ENCODE measurements at regions of chr1 and their contacts with region 1.

Region 1: DNA sequence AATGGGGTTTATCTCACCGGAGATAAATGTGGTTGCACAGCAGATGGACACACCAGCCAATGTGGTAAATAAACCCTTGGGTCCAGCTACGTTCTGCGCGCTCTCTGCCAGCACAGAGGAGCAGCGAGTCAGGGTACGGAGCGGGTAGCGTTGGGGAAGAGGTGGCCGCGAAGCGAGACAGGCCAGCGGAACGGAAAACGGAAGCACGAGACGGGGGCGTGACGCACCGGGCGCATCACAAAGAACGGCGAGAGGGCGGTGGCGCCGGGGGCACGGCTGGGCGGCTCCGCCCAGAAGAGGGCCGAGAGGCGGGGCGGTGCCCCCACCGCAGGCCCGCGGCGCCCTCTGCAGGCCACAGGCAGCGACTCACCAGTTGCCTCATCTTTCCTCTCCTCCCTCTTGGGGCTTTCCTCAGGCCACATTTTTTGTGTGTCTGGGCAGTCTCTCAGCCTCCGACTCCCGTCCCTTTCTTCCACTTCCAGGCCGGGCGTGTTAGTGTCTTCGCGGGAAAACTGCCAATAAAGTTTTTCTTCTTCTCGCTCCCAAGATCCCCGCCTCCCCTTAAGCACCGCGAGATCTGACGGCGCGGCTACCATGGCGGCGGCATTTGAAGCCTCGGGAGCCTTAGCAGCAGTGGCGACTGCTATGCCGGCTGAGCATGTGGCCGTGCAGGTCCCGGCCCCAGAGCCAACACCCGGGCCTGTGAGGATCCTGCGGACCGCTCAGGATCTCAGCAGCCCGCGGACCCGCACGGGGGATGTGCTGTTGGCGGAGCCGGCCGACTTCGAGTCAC is at the start of gene DDX20:
- DNase-seq: peak; percentile 94
- ATAC-seq: peak; percentile 89
- H3K4me3 Mint-ChIP-seq: peak within 1 kb of the TSS; percentile 93
- H3K27ac Mint-ChIP-seq: peak within 1 kb of the TSS; percentile 99
- H3K4me1 Mint-ChIP-seq: peaks cover 57% of the 10 kb centered on the region
- H3K27me3 Mint-ChIP-seq: no peaks in the 10 kb centered on the region
- total RNA-seq, gene DDX20: 18.1 to 18.9 TPM

Region 2: GRCh38 chr1:111448918-111449702 is 306.4 kb before region 1 on chr1 and contains the starts of genes ATP5PB and WDR77:
- CTCF ChIA-PET with region 1: interaction called, 5 read pairs
- POLR2A ChIA-PET with region 1: interaction called, 11 read pairs
- DNase-seq: peak; percentile 96
- ATAC-seq: peak; percentile 97
- H3K4me3 Mint-ChIP-seq: peak within 1 kb of the TSS; percentile 100
- H3K27ac Mint-ChIP-seq: peak within 1 kb of the TSS; percentile 99
- H3K4me1 Mint-ChIP-seq: peaks cover 76% of the 10 kb centered on the region
- H3K27me3 Mint-ChIP-seq: no peaks in the 10 kb centered on the region
- total RNA-seq, gene ATP5PB: 396 to 404 TPM
- total RNA-seq, gene WDR77: 54.3 to 57.8 TPM

Region 3: DNA sequence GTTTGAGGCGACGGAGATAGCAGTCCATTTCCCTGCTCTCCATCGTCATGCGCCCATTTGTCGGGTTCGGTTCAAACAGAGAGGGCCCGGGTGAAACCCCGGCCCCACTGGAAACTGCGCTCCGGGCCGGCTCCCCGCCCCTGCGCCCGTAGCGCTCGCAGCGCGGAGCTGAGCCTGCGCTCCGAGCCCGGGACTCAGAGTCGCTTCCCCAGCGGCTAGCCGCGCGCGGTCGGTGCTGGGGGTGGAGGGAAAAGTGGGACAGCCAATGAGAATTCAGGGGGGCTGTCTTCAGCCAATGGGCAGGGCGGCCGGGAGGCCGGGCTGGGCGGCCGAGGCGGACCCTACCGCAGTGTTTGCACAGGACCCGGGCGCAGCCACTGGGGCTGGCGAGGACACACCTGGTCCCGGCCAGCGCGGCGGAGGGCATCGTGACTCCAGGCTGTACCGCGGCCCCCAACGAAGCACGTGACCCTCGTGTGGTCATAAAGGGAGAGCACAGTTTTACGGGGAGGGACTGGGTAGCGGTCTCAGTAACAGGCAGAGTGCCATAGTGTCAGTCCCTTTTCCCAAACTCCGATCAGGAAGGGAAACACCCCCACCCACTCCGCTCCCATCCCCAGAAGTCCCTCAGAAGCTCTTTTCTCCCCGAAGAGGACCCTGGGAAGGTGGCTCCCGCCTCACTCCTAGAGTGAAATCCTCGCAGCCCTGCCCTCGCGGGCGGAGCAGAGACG is 16.2 kb before region 1 on chr1 and contains the start of gene INKA2:
- CTCF ChIA-PET with region 1: interaction called, 25 read pairs
- POLR2A ChIA-PET with region 1: interaction called, 10 read pairs
- DNase-seq: peak; percentile 88
- ATAC-seq: peak; percentile 90
- H3K4me3 Mint-ChIP-seq: peak within 1 kb of the TSS; percentile 80
- H3K27ac Mint-ChIP-seq: peak within 1 kb of the TSS; percentile 75
- H3K4me1 Mint-ChIP-seq: peaks cover 21% of the 10 kb centered on the region
- H3K27me3 Mint-ChIP-seq: peaks cover 46% of the 10 kb centered on the region
- total RNA-seq, gene INKA2: 4.1 to 4.3 TPM

Region 4: DNA sequence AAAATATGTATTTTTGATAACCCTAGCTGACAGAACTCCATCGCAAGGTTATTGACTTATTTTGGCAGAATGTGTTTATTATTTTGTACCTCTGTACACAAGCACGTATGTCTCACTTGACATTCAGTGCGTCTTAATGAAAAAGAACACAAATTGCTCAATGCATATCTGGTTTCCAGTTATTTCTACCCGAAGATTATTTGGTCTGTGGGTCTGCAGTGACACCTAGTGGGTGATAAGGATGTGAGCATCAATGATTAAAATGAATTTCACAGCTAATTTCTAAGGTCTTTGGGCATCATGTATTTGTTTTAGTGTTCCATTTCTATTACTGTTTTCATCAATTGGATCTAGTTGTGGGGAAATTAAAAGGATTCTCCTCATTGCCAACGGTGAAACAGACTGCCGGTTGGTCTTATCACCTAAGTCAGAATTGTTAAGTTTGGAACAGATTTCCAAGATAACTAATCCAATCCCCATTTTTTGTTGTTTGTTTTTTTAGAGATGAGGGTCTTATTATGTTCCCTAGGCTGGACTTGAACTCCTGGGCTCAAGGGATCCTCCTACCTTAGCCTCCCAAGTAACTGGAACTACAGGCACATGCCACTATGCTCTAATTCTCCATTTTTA is 14.1 kb after region 1 on chr1:
- CTCF ChIA-PET with region 1: interaction called, 40 read pairs
- POLR2A ChIA-PET with region 1: interaction called, 5 read pairs
- DNase-seq: peak; percentile 64
- ATAC-seq: no peak
- H3K4me3 Mint-ChIP-seq: no peak overlapping the region
- H3K27ac Mint-ChIP-seq: no peak overlapping the region
- H3K4me1 Mint-ChIP-seq: no peaks in the 10 kb centered on the region
- H3K27me3 Mint-ChIP-seq: no peaks in the 10 kb centered on the region

Region 5: GRCh38 chr1:111827946-111828538 is 72.5 kb after region 1 on chr1:
- CTCF ChIA-PET with region 1: no interaction called
- POLR2A ChIA-PET with region 1: no interaction called
- DNase-seq: no peak
- ATAC-seq: no peak
- H3K4me3 Mint-ChIP-seq: no peak overlapping the region
- H3K27ac Mint-ChIP-seq: no peak overlapping the region
- H3K4me1 Mint-ChIP-seq: no peaks in the 10 kb centered on the region
- H3K27me3 Mint-ChIP-seq: peaks cover 23% of the 10 kb centered on the region

Region 6: GRCh38 chr1:111864791-111865190 is 109.3 kb after region 1 on chr1:
- CTCF ChIA-PET with region 1: no interaction called
- POLR2A ChIA-PET with region 1: no interaction called
- DNase-seq: peak; percentile 36
- ATAC-seq: no peak
- H3K4me3 Mint-ChIP-seq: no peak overlapping the region
- H3K27ac Mint-ChIP-seq: no peak overlapping the region
- H3K4me1 Mint-ChIP-seq: peaks cover 4% of the 10 kb centered on the region
- H3K27me3 Mint-ChIP-seq: peaks cover 18% of the 10 kb centered on the region